ENCODE measurements at regions of chr10 and their contacts with region 1.

Region 1: DNA sequence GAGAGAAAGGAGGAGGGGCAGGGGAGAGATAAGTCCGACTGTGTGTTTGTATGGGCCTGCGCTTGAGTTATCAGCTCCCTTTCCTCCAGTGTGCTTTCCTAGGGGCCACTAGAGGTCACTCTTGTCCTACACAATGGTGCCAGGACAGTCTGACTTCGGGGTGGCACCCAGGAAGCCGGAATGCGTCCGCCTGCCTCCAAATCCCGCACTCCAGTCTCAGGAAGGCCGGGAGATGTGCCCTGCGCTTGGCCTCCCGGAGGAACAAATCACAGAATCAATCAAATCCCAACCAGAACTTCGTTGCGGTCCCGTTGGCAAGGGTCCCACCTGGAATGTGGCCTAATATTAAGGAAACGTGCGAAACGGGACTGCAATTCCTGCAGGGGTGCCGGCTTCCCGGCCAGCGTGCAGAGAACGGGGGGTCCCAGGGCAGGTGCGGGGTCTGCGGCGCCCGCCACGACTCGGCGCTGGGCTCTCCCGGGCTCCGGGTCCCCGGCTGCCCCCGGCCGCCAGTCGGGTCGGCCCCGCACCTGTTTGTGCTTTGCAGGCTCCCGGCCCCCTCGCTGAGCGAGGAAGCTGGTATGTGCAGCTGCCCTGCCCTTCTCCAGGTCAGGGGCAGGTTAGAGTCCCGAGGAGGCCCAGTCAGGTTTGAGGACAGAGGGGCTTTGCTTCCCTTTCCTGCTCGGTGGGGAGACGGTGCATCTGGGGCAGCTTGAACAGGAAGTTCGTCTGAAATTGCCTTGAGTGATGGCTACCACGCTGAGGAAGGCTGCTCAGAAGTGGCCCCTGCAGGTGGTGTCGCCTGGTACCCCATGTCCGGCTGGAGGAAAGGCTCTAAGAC is 21.0 kb upstream of the HPS1 start:
- DNase-seq: peak; percentile 89
- ATAC-seq: peak; percentile 100
- H3K4me3 ChIP-seq: peak overlapping the region in 1 of 2 experiments; percentile 2; a peak in 1 of 4 replicates
- H3K27ac ChIP-seq: no peak overlapping the region
- H3K4me1 ChIP-seq: peaks cover 0 to 12% of the 10 kb centered on the region in 2 experiments; a peak in 3 of 4 replicates
- H3K27me3 ChIP-seq: peaks cover 11% of the 10 kb centered on the region; the same call in 1 of the 2 replicates
- CTCF ChIP-seq: peak; percentile 84 to 94 (median 87)
- POLR2A ChIP-seq: no peak
- RAD21 ChIP-seq: peak; percentile 99

Region 2: GRCh38 chr10:97759158-97759887 is 708.4 kb before region 1 on chr10:
- CTCF ChIA-PET with region 1: no interaction called
- POLR2A ChIA-PET with region 1: no interaction called
- RAD21 ChIA-PET with region 1: no interaction called
- intact Hi-C with region 1: no loop called
- DNase-seq: peak; percentile 48
- ATAC-seq: peak; percentile 94
- H3K4me3 ChIP-seq: no peak overlapping the region
- H3K27ac ChIP-seq: no peak overlapping the region
- H3K4me1 ChIP-seq: peaks cover 2% of the 10 kb centered on the region in 2 experiments; a peak in 3 of 4 replicates
- H3K27me3 ChIP-seq: no peaks in the 10 kb centered on the region
- CTCF ChIP-seq: peak; percentile 79 to 98 (median 94)
- POLR2A ChIP-seq: no peak
- RAD21 ChIP-seq: peak; percentile 86

Region 3: GRCh38 chr10:98664331-98665042 is 196.8 kb after region 1 on chr10:
- CTCF ChIA-PET with region 1: interaction called, 10 read pairs
- POLR2A ChIA-PET with region 1: no interaction called
- RAD21 ChIA-PET with region 1: no interaction called
- intact Hi-C with region 1: loop called (anchors 1 kb)
- DNase-seq: peak; percentile 47
- ATAC-seq: peak; percentile 98
- H3K4me3 ChIP-seq: no peak overlapping the region
- H3K27ac ChIP-seq: no peak overlapping the region
- H3K4me1 ChIP-seq: no peaks in the 10 kb centered on the region
- H3K27me3 ChIP-seq: peaks cover 26% of the 10 kb centered on the region
- CTCF ChIP-seq: peak; percentile 83 to 94 (median 86)
- POLR2A ChIP-seq: no peak
- RAD21 ChIP-seq: peak; percentile 85

Region 4: GRCh38 chr10:99042051-99042771 is 574.5 kb after region 1 on chr10:
- CTCF ChIA-PET with region 1: interaction called, 28 read pairs
- POLR2A ChIA-PET with region 1: no interaction called
- RAD21 ChIA-PET with region 1: interaction called in 1 of 2 experiments, 4 read pairs
- intact Hi-C with region 1: loop called (anchors 1 kb)
- DNase-seq: no peak
- ATAC-seq: peak; percentile 67
- H3K4me3 ChIP-seq: no peak overlapping the region
- H3K27ac ChIP-seq: no peak overlapping the region
- H3K4me1 ChIP-seq: no peaks in the 10 kb centered on the region
- H3K27me3 ChIP-seq: peaks cover 8% of the 10 kb centered on the region; the same call in 1 of the 2 replicates
- CTCF ChIP-seq: no peak
- POLR2A ChIP-seq: no peak
- RAD21 ChIP-seq: no peak

Region 5: GRCh38 chr10:99248824-99249223 is 781.1 kb after region 1 on chr10:
- CTCF ChIA-PET with region 1: interaction called, 20 read pairs
- POLR2A ChIA-PET with region 1: no interaction called
- RAD21 ChIA-PET with region 1: interaction called in 1 of 2 experiments, 6 read pairs
- intact Hi-C with region 1: loop called (anchors 1 kb)
- DNase-seq: no peak
- ATAC-seq: no peak
- H3K4me3 ChIP-seq: no peak overlapping the region
- H3K27ac ChIP-seq: no peak overlapping the region
- H3K4me1 ChIP-seq: no peaks in the 10 kb centered on the region
- H3K27me3 ChIP-seq: no peaks in the 10 kb centered on the region
- CTCF ChIP-seq: no peak
- POLR2A ChIP-seq: no peak
- RAD21 ChIP-seq: no peak

Region 6: GRCh38 chr10:99370993-99371392 is 903.3 kb after region 1 on chr10:
- CTCF ChIA-PET with region 1: no interaction called
- POLR2A ChIA-PET with region 1: no interaction called
- RAD21 ChIA-PET with region 1: no interaction called
- intact Hi-C with region 1: loop called (anchors 10 kb)
- DNase-seq: peak; percentile 42
- ATAC-seq: peak; percentile 93
- H3K4me3 ChIP-seq: 0 out of 4 replicates have a peak overlapping the region, but pooled peaks of 1 of the 2 experiments have one; percentile 5
- H3K27ac ChIP-seq: no peak overlapping the region
- H3K4me1 ChIP-seq: no peaks in the 10 kb centered on the region
- H3K27me3 ChIP-seq: peaks cover 71% of the 10 kb centered on the region
- CTCF ChIP-seq: peak; percentile 58 to 81 (median 62); a peak in 5 of 6 replicates
- POLR2A ChIP-seq: no peak
- RAD21 ChIP-seq: peak; percentile 74

Region 7: GRCh38 chr10:99612167-99612831 is 1144.6 kb after region 1 on chr10:
- CTCF ChIA-PET with region 1: no interaction called
- POLR2A ChIA-PET with region 1: no interaction called
- RAD21 ChIA-PET with region 1: no interaction called
- intact Hi-C with region 1: loop called (anchors 5 kb)
- DNase-seq: peak; percentile 59
- ATAC-seq: peak; percentile 88
- H3K4me3 ChIP-seq: no peak overlapping the region
- H3K27ac ChIP-seq: no peak overlapping the region
- H3K4me1 ChIP-seq: no peaks in the 10 kb centered on the region
- H3K27me3 ChIP-seq: no peaks in the 10 kb centered on the region
- CTCF ChIP-seq: peak in 2 of 3 experiments; percentile 87 to 97; a peak in 4 of 6 replicates
- POLR2A ChIP-seq: no peak
- RAD21 ChIP-seq: no peak